Calu3 (cell line): ENCODE measurements at regions of chr6 and their contacts with region 1.

Region 1: DNA sequence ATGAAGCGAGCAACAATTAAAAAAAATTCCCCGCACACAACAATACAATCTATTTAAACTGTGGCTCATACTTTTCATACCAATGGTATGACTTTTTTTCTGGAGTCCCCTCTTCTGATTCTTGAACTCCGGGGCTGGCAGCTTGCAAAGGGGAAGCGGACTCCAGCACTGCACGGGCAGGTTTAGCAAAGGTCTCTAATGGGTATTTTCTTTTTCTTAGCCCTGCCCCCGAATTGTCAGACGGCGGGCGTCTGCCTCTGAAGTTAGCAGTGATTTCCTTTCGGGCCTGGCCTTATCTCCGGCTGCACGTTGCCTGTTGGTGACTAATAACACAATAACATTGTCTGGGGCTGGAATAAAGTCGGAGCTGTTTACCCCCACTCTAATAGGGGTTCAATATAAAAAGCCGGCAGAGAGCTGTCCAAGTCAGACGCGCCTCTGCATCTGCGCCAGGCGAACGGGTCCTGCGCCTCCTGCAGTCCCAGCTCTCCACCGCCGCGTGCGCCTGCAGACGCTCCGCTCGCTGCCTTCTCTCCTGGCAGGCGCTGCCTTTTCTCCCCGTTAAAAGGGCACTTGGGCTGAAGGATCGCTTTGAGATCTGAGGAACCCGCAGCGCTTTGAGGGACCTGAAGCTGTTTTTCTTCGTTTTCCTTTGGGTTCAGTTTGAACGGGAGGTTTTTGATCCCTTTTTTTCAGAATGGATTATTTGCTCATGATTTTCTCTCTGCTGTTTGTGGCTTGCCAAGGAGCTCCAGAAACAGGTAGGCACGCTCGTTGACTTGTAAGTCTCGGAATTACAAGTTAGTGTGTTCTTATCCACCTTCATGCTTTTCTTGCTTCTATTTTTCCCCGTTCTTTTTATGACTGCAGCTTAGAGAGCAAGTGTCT is at the start of gene EDN1:
- DNase-seq: peak; percentile 86
- H3K4me3 Mint-ChIP-seq: peak within 1 kb of the TSS; percentile 81
- H3K27ac Mint-ChIP-seq: peak within 1 kb of the TSS; percentile 92
- H3K4me1 Mint-ChIP-seq: peaks cover 35% of the 10 kb centered on the region
- H3K27me3 Mint-ChIP-seq: no peaks in the 10 kb centered on the region
- CTCF ChIP-seq: no peak
- total RNA-seq, gene EDN1: 24.7 and 40.6 TPM in 2 replicates

Region 2: DNA sequence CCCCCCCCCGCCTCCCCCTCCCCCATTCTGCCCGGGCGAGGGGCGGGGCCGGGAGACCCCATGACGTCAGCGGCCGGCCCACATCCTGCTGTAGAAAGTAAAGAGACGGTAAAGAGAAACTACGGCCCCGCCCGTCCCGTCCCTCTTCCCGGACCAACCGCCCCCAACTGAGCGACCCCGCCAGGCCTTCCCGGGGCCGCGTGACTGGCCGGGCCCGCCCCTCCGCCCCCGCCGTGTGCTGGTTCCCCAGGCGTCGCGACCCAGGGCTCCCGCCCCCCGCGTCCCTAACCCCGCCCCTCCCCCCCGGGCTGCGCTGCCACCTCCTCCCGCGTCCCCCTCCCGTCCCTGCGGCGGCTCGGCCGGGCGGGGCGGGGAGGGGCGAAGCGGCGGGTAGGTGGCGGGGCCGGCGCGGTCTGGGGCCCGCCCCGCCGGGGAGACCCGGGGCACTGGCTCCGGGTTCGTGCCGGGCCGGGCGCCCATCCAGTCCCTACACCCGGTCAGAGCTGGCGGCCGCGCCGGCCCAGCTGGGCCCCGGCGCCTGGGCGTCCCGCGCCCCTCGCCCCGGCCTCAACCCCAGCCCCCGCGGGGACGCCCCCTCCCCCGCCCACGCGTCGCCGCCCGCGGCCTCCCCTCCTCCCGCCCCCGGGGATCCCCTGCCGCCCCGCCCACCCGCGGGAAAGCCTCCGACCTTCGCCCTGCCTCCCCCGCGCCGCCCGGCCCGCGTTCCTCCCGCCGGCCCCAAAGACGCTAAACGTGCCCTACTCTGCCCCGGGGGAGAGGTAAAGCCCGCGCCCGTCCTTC is 278.7 kb before region 1 on chr6:
- CTCF ChIA-PET with region 1: no interaction called
- intact Hi-C with region 1: loop called (anchors 5 kb)
- DNase-seq: peak; percentile 91
- H3K4me3 Mint-ChIP-seq: peak overlapping the region; percentile 93
- H3K27ac Mint-ChIP-seq: peak overlapping the region; percentile 74
- H3K4me1 Mint-ChIP-seq: peaks cover 15% of the 10 kb centered on the region
- H3K27me3 Mint-ChIP-seq: no peaks in the 10 kb centered on the region
- CTCF ChIP-seq: no peak

Region 3: GRCh38 chr6:12233693-12234571 is 56.2 kb before region 1 on chr6:
- CTCF ChIA-PET with region 1: interaction called, 6 read pairs
- intact Hi-C with region 1: loop called (anchors 2 kb)
- DNase-seq: peak; percentile 29
- H3K4me3 Mint-ChIP-seq: no peak overlapping the region
- H3K27ac Mint-ChIP-seq: no peak overlapping the region
- H3K4me1 Mint-ChIP-seq: peaks cover 8% of the 10 kb centered on the region
- H3K27me3 Mint-ChIP-seq: no peaks in the 10 kb centered on the region
- CTCF ChIP-seq: peak; percentile 64

Region 4: DNA sequence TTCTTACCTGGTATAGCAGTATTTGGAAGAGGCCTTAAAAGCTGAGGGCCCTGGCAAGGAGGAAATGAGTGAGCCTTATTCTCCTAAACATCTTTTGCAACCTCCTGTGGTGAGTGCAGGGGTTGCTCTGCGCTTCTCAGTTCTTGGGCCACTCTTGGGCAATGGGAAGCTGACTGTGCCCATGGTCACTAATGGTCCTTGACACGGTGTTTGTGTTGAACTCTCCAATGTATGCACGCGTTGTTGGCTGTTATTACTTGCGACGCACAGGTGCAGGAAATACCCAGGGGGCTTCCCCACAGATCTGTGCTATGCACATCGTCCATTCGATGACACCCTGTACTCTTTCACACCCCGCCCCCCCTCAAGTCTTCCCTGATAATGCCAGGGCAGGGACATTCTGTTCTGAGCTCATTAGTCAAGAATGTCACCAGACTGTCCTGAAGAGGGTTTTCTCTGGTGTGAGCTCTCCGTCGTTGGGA is 79.6 kb after region 1 on chr6:
- CTCF ChIA-PET with region 1: interaction called, 14 read pairs
- intact Hi-C with region 1: loop called (anchors 5 kb)
- DNase-seq: peak; percentile 28
- H3K4me3 Mint-ChIP-seq: no peak overlapping the region
- H3K27ac Mint-ChIP-seq: no peak overlapping the region
- H3K4me1 Mint-ChIP-seq: peaks cover 43% of the 10 kb centered on the region
- H3K27me3 Mint-ChIP-seq: no peaks in the 10 kb centered on the region
- CTCF ChIP-seq: no peak

Region 5: GRCh38 chr6:12605888-12606345 is 315.7 kb after region 1 on chr6:
- CTCF ChIA-PET with region 1: interaction called, 8 read pairs
- intact Hi-C with region 1: loop called (anchors 2 kb)
- DNase-seq: peak; percentile 60
- H3K4me3 Mint-ChIP-seq: no peak overlapping the region
- H3K27ac Mint-ChIP-seq: no peak overlapping the region
- H3K4me1 Mint-ChIP-seq: peaks cover 15% of the 10 kb centered on the region
- H3K27me3 Mint-ChIP-seq: no peaks in the 10 kb centered on the region
- CTCF ChIP-seq: peak; percentile 58